AG04449 (cell line): ENCODE measurements at regions of chr1 and their contacts with region 1.

Region 1: GRCh38 chr1:26472320-26472900 is at the start of gene HMGN2:
- DNase-seq: peak; percentile 42
- H3K4me3 ChIP-seq: peak within 1 kb of the TSS; percentile 77
- CTCF ChIP-seq: no peak

Region 2: DNA sequence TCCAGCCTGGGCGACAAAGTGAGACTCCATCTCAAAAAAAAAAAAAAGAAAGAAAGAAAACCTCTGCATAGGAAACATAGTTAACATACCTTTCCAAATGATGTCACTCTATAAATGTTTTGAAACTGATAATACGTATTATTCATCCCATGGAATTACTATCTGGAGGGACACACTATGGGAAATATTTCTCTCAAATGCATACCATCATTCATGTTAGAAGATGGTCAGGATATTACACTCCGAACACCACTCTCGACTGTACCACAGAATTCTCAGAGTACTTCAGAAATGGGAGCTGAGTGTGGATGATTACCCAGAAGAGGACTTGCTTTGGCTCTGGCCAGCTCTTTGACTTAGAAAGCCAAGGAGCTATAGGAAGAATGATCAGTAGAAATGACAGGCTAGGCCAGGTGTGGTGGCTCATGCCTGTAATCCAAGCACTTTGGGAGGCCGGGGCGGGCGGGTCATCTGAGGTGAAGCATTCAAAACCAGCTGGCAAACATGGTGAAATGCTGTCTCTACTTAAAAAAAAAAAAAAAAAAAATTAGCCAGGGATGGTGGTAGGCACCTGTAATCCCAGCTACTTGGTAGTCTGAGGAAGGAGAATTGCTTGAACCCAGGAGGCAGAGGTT is 67.0 kb before region 1 on chr1:
- CTCF ChIA-PET with region 1: no interaction called
- POLR2A ChIA-PET with region 1: no interaction called
- DNase-seq: peak; percentile 69
- H3K4me3 ChIP-seq: no peak overlapping the region
- CTCF ChIP-seq: no peak

Region 3: DNA sequence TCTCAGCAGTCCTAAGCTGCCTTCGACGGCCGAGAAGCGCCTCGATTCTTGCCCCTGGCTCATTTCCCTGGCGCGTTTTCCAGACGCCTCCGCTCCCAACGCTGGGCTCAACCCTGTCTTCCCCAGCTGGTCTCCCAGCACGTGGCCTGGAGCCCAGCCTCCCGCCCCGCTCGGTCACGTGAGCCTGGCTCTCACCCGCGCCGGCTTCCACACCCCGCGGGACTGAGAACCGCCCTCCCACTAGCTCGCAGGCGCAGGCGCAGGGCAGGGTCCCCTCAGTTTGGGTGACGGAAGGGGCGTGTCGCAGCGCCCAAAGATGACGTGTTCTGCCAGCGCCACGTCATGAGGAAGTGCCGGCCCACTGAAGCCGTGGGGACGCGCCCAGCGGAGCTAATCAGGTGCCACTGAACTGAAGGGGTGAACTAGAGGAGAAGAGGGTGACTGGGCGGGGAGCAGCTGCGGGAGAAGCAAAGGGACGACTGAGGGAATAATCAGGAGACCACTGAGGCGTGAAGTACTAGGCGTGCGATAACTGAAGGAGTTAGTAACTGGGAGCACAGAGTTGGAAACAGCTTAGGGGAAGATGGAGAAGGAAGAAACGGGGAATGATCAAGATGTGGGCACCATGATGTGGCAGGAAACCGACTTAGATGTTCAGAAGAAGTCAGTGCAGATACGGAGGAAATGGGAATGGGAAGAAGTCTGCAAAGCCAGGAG is 40.3 kb before region 1 on chr1 and contains the start of gene DHDDS:
- CTCF ChIA-PET with region 1: interaction called, 24 read pairs
- POLR2A ChIA-PET with region 1: interaction called, 3 read pairs
- DNase-seq: peak; percentile 82
- H3K4me3 ChIP-seq: peak within 1 kb of the TSS; percentile 86
- CTCF ChIP-seq: no peak

Region 4: DNA sequence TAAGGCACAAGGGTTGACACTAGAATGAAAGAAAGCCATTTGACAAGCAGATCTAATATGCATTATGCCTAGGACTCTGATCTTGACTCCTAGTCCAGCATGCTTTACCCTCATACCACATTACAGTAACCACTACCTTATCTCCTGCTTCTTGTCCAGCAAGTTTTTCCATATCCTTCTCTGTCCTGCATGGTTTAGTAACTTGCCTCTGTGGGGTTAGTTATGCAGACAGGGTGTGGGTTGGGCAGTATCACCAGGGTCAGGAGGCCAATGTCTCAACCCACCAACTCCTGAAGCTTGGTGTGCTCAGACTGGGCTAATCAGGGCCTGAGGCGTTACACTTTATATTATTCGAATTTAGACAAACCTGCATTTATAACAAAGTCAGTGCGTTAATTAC is 21.5 kb before region 1 on chr1:
- CTCF ChIA-PET with region 1: interaction called, 20 read pairs
- POLR2A ChIA-PET with region 1: no interaction called
- DNase-seq: no peak
- H3K4me3 ChIP-seq: no peak overlapping the region
- CTCF ChIP-seq: no peak

Region 5: DNA sequence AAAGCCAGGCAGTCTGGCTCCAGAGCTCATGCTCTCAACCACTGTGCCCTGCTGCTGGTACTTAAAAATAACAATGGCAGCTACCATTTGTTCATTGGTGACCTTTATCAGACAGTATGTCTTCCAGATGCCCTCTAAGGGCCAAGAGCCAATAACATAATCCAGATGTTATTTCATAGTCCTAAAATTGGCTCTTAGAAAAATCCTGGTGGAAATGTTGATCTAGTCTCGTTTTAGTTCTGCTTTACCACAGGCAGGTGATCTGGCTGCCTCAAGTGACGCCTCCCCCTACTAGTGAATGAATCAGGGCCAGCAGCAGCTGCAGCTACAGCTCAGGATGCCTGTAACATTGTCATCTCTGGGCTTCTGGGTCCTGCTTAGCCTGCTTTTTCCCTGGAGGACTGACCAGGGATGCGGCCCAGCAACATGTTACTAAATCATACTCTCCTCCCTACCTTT is 12.8 kb before region 1 on chr1:
- CTCF ChIA-PET with region 1: interaction called, 47 read pairs
- POLR2A ChIA-PET with region 1: no interaction called
- DNase-seq: no peak
- H3K4me3 ChIP-seq: no peak overlapping the region
- CTCF ChIP-seq: no peak

Region 6: GRCh38 chr1:26482921-26483680 is 10.7 kb after region 1 on chr1:
- CTCF ChIA-PET with region 1: interaction called, 17 read pairs
- POLR2A ChIA-PET with region 1: no interaction called
- DNase-seq: no peak
- H3K4me3 ChIP-seq: no peak overlapping the region
- CTCF ChIP-seq: no peak

Region 7: GRCh38 chr1:26645734-26646133 is 173.3 kb after region 1 on chr1:
- CTCF ChIA-PET with region 1: no interaction called
- POLR2A ChIA-PET with region 1: no interaction called
- DNase-seq: no peak
- H3K4me3 ChIP-seq: no peak overlapping the region
- CTCF ChIP-seq: no peak